ENCODE measurements at regions of chr3 and their contacts with region 1.

Region 1: DNA sequence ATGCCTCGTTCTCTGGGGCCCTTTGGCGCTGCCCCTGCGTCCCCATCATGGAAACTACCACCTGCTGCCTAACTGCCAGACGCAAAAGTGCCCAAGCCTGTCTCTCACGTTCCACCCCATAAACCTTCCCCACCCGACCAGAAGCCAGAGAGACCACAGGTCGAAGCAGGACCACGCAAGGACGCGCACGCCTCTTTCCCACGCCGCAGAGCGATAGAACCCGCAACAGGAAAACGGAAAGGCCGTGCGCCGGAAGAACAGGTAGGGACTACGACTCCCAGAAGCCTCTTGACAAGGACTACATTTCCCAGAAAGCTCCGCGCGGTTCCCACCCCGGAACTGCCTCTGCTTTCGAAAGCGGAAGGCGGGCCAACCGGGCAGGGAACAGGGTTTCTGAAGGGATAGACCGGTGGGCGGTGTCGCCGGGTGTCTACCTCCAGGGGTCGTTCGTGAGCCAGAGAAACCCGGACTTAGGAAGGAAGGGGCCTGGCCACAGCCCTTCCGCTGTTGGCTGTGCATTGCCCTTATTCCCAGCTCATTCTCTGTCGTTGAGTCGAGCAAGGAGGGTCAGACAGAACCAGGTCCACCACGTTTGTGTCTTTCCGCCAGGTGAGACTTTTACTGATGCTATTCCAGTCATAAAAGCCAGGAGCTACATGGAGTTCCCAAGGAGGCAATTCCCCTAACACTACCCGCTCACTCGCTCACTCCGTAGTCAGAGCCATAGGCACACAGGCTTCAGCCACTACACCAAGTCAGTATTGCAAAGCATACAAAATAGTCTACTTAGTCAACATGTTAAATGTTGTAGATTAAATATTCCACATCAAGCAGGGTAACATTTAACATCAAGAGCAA is 56.6 kb upstream of the ZBTB38 start:
- DNase-seq: peak; percentile 97
- H3K4me3 ChIP-seq: peak overlapping the region; percentile 1 to 65 (median 49)
- H3K27ac ChIP-seq: peak overlapping the region; percentile 57
- H3K4me1 ChIP-seq: peaks cover 11% of the 10 kb centered on the region
- H3K27me3 ChIP-seq: no peaks in the 10 kb centered on the region
- CTCF ChIP-seq: peak; percentile 80 to 86
- POLR2A ChIP-seq: peak; percentile 76

Region 2: DNA sequence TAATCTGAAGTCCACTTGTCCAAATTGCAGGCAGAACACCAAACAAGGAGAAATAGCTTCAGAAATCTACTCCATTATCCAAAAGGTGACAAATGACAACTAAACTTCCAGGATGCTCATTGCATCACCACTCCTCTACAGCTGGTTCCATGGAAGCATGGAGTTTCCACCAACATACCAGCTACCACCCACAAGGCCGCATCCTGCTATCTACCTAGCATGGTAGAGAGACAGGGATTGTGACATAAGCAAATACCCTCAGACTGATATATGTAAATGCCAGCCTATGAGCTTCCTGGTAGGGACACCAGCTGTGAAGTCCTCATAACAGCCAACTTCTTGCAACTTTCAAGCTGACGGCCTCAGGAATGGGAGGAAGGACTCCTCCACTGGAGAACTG is 634.0 kb before region 1 on chr3 and contains the start of gene TRIM42:
- CTCF ChIA-PET with region 1: no interaction called
- POLR2A ChIA-PET with region 1: no interaction called
- dilution Hi-C with region 1: no loop called
- intact Hi-C with region 1: no loop called
- DNase-seq: no peak
- H3K4me3 ChIP-seq: no peak within 1 kb of the TSS
- H3K27ac ChIP-seq: no peak within 1 kb of the TSS
- H3K4me1 ChIP-seq: no peaks in the 10 kb centered on the region
- H3K27me3 ChIP-seq: no peaks in the 10 kb centered on the region
- CTCF ChIP-seq: no peak
- POLR2A ChIP-seq: no peak
- total RNA-seq, gene TRIM42: not detected in 2 replicates

Region 3: GRCh38 chr3:141114816-141115460 is 196.8 kb before region 1 on chr3:
- CTCF ChIA-PET with region 1: no interaction called
- POLR2A ChIA-PET with region 1: no interaction called
- dilution Hi-C with region 1: no loop called
- intact Hi-C with region 1: no loop called
- DNase-seq: no peak
- H3K4me3 ChIP-seq: no peak overlapping the region
- H3K27ac ChIP-seq: no peak overlapping the region
- H3K4me1 ChIP-seq: no peaks in the 10 kb centered on the region
- H3K27me3 ChIP-seq: no peaks in the 10 kb centered on the region
- CTCF ChIP-seq: peak; percentile 22 to 24
- POLR2A ChIP-seq: no peak

Region 4: DNA sequence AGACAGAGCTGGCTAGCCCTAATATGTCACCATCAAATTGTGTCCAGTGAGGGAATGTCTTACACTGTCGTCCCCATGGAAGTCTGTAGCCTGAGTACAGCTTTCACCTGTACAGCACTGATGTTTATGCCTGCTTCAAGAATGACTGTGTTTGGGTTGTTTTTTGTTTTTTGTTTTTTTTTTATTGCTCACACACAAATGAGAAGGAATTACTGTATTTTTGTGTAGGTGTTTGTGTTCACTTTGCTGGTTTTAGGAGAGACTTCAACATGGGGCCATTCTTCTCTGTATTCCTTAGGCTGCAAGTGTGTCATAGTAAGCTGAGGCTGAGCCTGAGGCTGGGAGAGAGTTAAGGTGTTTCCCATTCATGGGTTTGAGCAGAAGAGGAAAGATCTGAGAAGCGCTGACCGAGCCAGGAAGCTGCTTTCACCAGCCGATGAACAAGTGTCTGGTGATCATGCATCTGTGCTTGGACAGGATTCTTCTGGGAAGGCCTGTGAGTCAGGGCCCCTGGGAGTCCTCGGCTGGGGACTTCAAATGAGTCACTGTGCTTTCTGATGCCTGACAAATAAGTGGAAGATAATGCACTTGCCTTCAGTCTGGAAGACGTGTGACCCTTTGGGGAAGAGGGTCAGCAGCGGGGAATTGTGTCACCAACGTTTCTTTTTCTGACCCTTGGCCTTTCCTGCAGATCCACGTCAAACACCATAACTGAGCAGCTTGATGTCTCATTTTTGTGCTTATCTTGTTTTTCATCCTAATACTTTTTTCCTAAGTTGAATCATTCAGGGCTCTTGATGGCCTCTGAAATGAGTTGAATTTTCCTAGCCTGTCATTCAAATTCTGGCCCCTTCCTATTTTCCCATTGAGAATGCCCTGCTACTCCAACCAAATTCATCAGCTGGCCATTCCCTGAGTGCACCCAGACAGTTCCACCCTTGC is 19.9 kb after region 1 on chr3:
- CTCF ChIA-PET with region 1: interaction called, 12 read pairs
- POLR2A ChIA-PET with region 1: interaction called, 7 read pairs
- dilution Hi-C with region 1: no loop called
- intact Hi-C with region 1: loop called (anchors 2 kb)
- DNase-seq: peak; percentile 95
- H3K4me3 ChIP-seq: no peak overlapping the region
- H3K27ac ChIP-seq: peak overlapping the region; percentile 72
- H3K4me1 ChIP-seq: peaks cover 28% of the 10 kb centered on the region
- H3K27me3 ChIP-seq: no peaks in the 10 kb centered on the region
- CTCF ChIP-seq: no peak
- POLR2A ChIP-seq: no peak

Region 5: GRCh38 chr3:141370065-141370533 is 58.4 kb after region 1 on chr3:
- CTCF ChIA-PET with region 1: interaction called, 10 read pairs
- POLR2A ChIA-PET with region 1: no interaction called
- dilution Hi-C with region 1: no loop called
- intact Hi-C with region 1: loop called (anchors 1 kb)
- DNase-seq: peak; percentile 94
- H3K4me3 ChIP-seq: peak overlapping the region in 1 of 3 experiments; percentile 86
- H3K27ac ChIP-seq: peak overlapping the region; percentile 96
- H3K4me1 ChIP-seq: peaks cover 47% of the 10 kb centered on the region
- H3K27me3 ChIP-seq: no peaks in the 10 kb centered on the region
- CTCF ChIP-seq: peak; percentile 36 to 47
- POLR2A ChIP-seq: peak; percentile 41

Region 6: DNA sequence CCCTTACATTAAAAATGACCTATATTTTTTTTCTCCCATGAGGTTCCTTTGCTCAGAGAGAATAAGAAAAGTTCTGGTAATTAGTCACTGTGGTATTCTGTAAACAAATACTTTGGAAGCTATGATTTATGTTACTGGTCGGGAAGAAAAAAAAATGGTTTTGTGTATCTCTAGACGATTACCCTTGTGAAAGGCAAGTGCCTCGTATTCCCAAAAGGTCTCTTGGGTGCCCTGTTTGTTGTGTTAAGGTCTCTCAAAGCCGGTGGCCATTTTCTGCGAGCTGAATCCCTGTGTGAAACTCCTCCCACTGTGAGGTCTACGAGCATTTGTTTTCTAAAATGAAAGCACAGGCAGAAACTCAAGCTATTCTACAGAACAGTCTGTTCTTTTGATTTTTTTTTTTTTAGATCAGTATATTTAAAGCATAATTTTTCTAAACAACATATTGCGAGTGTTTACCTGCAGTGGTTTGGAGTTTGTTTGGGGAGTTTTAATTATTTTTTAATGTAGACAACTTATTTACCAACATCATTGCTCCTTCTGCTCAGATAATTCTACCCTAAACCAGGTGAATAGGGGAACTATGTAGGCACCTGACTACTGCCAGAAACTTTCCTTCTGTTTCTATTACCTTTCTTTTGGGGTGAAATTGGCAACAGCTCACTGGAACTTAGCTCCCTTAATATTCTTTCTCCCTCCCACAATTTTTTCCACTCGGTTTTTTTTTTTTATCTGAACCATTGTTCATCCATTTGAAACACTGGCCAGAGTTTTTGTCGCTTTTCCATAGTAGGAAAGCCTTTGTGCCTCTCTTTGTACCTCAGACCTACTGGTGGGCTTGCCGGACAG is 100.6 kb after region 1 on chr3:
- CTCF ChIA-PET with region 1: interaction called, 8 read pairs
- POLR2A ChIA-PET with region 1: no interaction called
- dilution Hi-C with region 1: no loop called
- intact Hi-C with region 1: loop called (anchors 1 kb)
- DNase-seq: peak; percentile 88
- H3K4me3 ChIP-seq: peak overlapping the region in 1 of 3 experiments; percentile 27
- H3K27ac ChIP-seq: peak overlapping the region; percentile 90
- H3K4me1 ChIP-seq: peaks cover 68% of the 10 kb centered on the region
- H3K27me3 ChIP-seq: no peaks in the 10 kb centered on the region
- CTCF ChIP-seq: no peak
- POLR2A ChIP-seq: peak; percentile 41

Region 7: GRCh38 chr3:141441381-141442364 is 129.9 kb after region 1 on chr3:
- CTCF ChIA-PET with region 1: interaction called, 49 read pairs
- POLR2A ChIA-PET with region 1: no interaction called
- dilution Hi-C with region 1: no loop called
- intact Hi-C with region 1: loop called (anchors 1 kb)
- DNase-seq: peak; percentile 85
- H3K4me3 ChIP-seq: no peak overlapping the region
- H3K27ac ChIP-seq: peak overlapping the region; percentile 2
- H3K4me1 ChIP-seq: peaks cover 13% of the 10 kb centered on the region
- H3K27me3 ChIP-seq: no peaks in the 10 kb centered on the region
- CTCF ChIP-seq: peak; percentile 91 to 96
- POLR2A ChIP-seq: no peak

Region 8: GRCh38 chr3:141498598-141499223 is 187.0 kb after region 1 on chr3:
- CTCF ChIA-PET with region 1: no interaction called
- POLR2A ChIA-PET with region 1: no interaction called
- dilution Hi-C with region 1: no loop called
- intact Hi-C with region 1: no loop called
- DNase-seq: no peak
- H3K4me3 ChIP-seq: no peak overlapping the region
- H3K27ac ChIP-seq: no peak overlapping the region
- H3K4me1 ChIP-seq: peaks cover 3% of the 10 kb centered on the region
- H3K27me3 ChIP-seq: no peaks in the 10 kb centered on the region
- CTCF ChIP-seq: no peak
- POLR2A ChIP-seq: no peak

Region 9: DNA sequence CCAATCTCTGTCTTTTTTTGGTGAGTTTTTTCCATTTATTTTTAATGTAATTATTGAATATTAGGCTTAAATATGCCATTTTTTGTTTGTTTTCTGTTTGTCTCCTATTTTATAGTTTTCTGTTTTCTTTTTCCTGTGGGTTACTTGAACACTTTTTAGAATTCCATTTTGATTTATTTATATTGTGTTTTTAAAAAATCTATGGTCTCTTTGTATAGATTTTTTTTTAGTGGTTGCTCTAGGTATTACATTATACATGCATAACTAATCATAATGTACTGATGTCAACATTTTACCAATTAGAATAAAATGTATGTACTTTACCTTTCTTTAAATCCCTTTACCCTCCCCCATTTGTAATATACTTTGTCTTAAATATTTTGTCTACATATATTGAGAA is 231.3 kb after region 1 on chr3:
- CTCF ChIA-PET with region 1: no interaction called
- POLR2A ChIA-PET with region 1: no interaction called
- dilution Hi-C with region 1: no loop called
- intact Hi-C with region 1: no loop called
- DNase-seq: no peak
- H3K4me3 ChIP-seq: no peak overlapping the region
- H3K27ac ChIP-seq: no peak overlapping the region
- H3K4me1 ChIP-seq: peaks cover 20% of the 10 kb centered on the region
- H3K27me3 ChIP-seq: no peaks in the 10 kb centered on the region
- CTCF ChIP-seq: no peak
- POLR2A ChIP-seq: no peak

Region 10: GRCh38 chr3:141553055-141553454 is 241.3 kb after region 1 on chr3:
- CTCF ChIA-PET with region 1: interaction called, 3 read pairs
- POLR2A ChIA-PET with region 1: no interaction called
- dilution Hi-C with region 1: no loop called
- intact Hi-C with region 1: loop called (anchors 1 kb)
- DNase-seq: peak; percentile 52
- H3K4me3 ChIP-seq: no peak overlapping the region
- H3K27ac ChIP-seq: no peak overlapping the region
- H3K4me1 ChIP-seq: peaks cover 49% of the 10 kb centered on the region
- H3K27me3 ChIP-seq: no peaks in the 10 kb centered on the region
- CTCF ChIP-seq: no peak
- POLR2A ChIP-seq: peak; percentile 43